PC-3 (cell line): ENCODE measurements at regions of chr1 and their contacts with region 1.

Region 1: DNA sequence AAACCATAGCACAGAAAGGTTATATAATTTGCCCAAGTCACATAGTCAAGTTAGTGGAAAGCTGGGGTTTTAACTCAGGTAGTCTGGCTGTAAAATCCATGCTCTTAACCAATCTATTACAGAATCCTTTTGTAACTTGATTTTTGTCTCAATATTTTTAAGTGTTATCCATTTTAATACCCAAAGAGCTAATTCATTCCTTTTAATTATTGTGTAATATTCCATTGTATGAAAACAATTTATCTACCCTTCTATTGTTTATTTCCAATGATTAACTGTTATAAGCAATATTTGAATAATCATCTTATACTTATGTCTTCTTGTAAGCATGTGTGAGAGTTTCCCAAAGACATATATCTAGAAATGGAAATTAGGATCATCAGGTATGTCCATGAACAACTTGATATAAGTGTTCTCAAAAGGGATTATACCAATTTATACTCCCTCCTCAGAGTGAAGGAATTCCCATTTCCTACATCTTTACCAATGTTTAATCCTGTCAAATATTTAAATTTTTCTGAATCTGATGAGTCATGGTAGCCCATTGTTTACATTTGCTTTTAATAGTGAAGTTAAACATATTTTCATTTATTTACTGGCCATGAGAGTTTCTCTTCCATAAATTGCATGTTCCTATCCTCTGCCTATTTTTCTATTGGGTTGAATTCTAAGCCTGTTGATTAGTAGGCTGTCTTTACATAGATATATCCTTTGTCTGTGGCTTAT is 13.9 kb downstream of the TEX50 start:
- DNase-seq: peak; percentile 97
- ATAC-seq: peak; percentile 97
- H3K4me3 ChIP-seq: no peak overlapping the region
- H3K27ac ChIP-seq: peak overlapping the region; percentile 3
- H3K4me1 ChIP-seq: peaks cover 24% of the 10 kb centered on the region
- H3K27me3 ChIP-seq: no peaks in the 10 kb centered on the region
- CTCF ChIP-seq: no peak

Region 2: GRCh38 chr1:173581383-173582079 is 67.5 kb before region 1 on chr1:
- CTCF ChIA-PET with region 1: no interaction called
- POLR2A ChIA-PET with region 1: no interaction called
- intact Hi-C with region 1: loop called (anchors 2 kb)
- DNase-seq: no peak
- ATAC-seq: no peak
- H3K4me3 ChIP-seq: no peak overlapping the region
- H3K27ac ChIP-seq: no peak overlapping the region
- H3K4me1 ChIP-seq: no peaks in the 10 kb centered on the region
- H3K27me3 ChIP-seq: no peaks in the 10 kb centered on the region
- CTCF ChIP-seq: no peak

Region 3: GRCh38 chr1:173590557-173590956 is 58.5 kb before region 1 on chr1:
- CTCF ChIA-PET with region 1: no interaction called
- POLR2A ChIA-PET with region 1: no interaction called
- intact Hi-C with region 1: loop called (anchors 5 kb)
- DNase-seq: peak; percentile 97
- ATAC-seq: peak; percentile 100
- H3K4me3 ChIP-seq: no peak overlapping the region
- H3K27ac ChIP-seq: peak overlapping the region; percentile 42
- H3K4me1 ChIP-seq: peaks cover 12% of the 10 kb centered on the region
- H3K27me3 ChIP-seq: no peaks in the 10 kb centered on the region
- CTCF ChIP-seq: no peak

Region 4: GRCh38 chr1:173758980-173759609 is 110.1 kb after region 1 on chr1:
- CTCF ChIA-PET with region 1: no interaction called
- POLR2A ChIA-PET with region 1: no interaction called
- intact Hi-C with region 1: no loop called
- DNase-seq: peak; percentile 77
- ATAC-seq: peak; percentile 50
- H3K4me3 ChIP-seq: no peak overlapping the region
- H3K27ac ChIP-seq: peak overlapping the region; percentile 26
- H3K4me1 ChIP-seq: peaks cover 8% of the 10 kb centered on the region
- H3K27me3 ChIP-seq: no peaks in the 10 kb centered on the region
- CTCF ChIP-seq: no peak